CD4-positive, alpha-beta memory T cell (primary cell): ENCODE measurements at regions of chr17 and their contacts with region 1.

Region 1: GRCh38 chr17:51000835-51001638 is 119.6 kb downstream of the SPAG9 start:
- DNase-seq: peak in 4 of 5 donors; percentile 62 to 68 (median 66)
- H3K4me3 ChIP-seq: no peak overlapping the region
- H3K4me3 Mint-ChIP-seq: no peak overlapping the region
- H3K27ac ChIP-seq: no peak overlapping the region
- H3K27ac Mint-ChIP-seq: peak overlapping the region in 2 of 7 donors; percentile 2 to 23
- H3K4me1 ChIP-seq: no peaks in the 10 kb centered on the region
- H3K4me1 Mint-ChIP-seq: peaks cover 0 to 3% (median 1%) of the 10 kb centered on the region in 4 donors
- H3K27me3 ChIP-seq: no peaks in the 10 kb centered on the region
- H3K27me3 Mint-ChIP-seq: no peaks in the 10 kb centered on the region

Region 2: DNA sequence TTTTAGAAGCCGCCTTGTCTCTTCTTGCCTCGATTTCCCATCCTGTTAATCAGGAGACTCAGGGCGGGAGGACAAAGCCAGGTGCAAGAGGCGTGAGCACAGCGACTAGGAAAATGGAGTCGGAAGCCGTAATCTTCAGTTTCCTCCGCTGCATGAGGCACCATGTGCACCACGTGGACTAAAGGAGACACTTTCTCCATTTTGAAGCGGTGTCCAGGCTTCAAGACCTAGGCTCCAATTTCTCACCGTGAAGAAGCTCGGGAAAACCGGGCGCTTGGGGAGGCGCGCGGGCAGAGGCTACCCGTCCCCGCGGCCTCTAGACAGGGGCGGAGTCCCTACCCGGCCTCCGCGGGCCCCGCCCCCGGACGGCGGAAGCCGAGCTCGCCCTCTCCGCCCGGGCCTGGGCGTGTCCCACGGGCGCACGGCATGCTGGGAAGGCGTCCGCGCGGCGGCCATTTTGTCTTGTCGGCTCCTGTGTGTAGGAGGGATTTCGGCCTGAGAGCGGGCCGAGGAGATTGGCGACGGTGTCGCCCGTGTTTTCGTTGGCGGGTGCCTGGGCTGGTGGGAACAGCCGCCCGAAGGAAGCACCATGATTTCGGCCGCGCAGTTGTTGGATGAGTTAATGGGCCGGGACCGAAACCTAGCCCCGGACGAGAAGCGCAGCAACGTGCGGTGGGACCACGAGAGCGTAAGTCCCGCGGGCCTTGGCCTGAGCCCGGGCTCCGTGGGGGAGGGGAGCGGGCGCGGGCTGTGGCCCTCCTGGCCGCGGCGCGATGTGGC is 281.7 kb before region 1 on chr17 and contains the start of gene LUC7L3:
- CTCF ChIA-PET with region 1: no interaction called
- POLR2A ChIA-PET with region 1: no interaction called
- intact Hi-C with region 1: no loop called
- DNase-seq: peak; percentile 91 to 96 (median 93)
- H3K4me3 ChIP-seq: peak within 1 kb of the TSS; percentile 55 to 100
- H3K4me3 Mint-ChIP-seq: peak within 1 kb of the TSS; percentile 86 to 99 (median 98)
- H3K27ac ChIP-seq: peak within 1 kb of the TSS; percentile 97
- H3K27ac Mint-ChIP-seq: peak within 1 kb of the TSS; percentile 78 to 99 (median 99)
- H3K4me1 ChIP-seq: peaks cover 42% of the 10 kb centered on the region
- H3K4me1 Mint-ChIP-seq: peaks cover 17 to 44% (median 32%) of the 10 kb centered on the region in 4 donors
- H3K27me3 ChIP-seq: no peaks in the 10 kb centered on the region
- H3K27me3 Mint-ChIP-seq: no peaks in the 10 kb centered on the region
- total RNA-seq, gene LUC7L3: 254 to 291 TPM

Region 3: GRCh38 chr17:50749245-50749644 is 251.8 kb before region 1 on chr17:
- CTCF ChIA-PET with region 1: no interaction called
- POLR2A ChIA-PET with region 1: no interaction called
- intact Hi-C with region 1: no loop called
- DNase-seq: no peak
- H3K4me3 ChIP-seq: no peak overlapping the region
- H3K4me3 Mint-ChIP-seq: no peak overlapping the region
- H3K27ac ChIP-seq: no peak overlapping the region
- H3K27ac Mint-ChIP-seq: peak overlapping the region in 4 of 7 donors; percentile 9 to 53 (median 26)
- H3K4me1 ChIP-seq: no peaks in the 10 kb centered on the region
- H3K4me1 Mint-ChIP-seq: peaks cover 0 to 3% (median 0%) of the 10 kb centered on the region in 4 donors
- H3K27me3 ChIP-seq: no peaks in the 10 kb centered on the region
- H3K27me3 Mint-ChIP-seq: no peaks in the 10 kb centered on the region

Region 4: DNA sequence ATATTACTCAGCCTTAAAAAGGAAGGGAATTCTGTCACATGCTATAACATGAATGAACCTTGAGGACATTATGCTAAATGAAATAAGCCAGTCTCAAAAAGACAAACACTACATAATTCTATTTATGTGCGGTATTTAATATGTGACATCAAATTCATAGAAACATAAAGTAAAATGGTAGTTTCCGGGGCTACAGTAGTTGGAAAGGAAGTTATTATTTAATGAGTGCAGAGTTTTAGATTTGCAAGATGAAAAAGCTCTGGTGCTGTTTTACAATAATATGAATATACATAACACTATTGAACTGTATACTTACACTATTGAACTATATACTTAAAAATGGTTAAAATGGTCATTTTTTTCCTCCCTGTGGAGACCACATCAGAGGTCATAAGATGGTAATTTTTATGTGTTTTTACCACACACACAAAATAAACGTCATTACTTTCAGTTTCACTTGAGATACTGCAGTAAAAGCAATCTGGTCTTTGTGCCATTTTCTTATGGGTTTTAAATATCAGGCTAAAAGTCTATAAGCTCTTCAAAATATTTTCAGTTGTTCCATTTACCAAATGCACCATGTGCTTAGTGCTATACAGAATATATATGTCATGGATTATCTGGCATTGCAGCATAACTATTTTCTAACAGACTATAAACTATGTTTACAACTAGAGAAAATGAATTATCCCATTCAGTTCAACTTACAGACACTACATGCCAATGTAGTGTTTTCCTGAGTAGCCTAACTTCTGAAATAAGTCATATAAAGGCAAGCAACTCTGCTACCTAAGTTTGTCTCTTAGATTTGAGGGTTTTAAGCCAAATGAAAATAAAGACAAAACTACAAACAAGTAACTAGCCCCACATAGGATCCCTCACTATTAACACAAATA is 28.8 kb after region 1 on chr17:
- CTCF ChIA-PET with region 1: interaction called, 10 read pairs
- POLR2A ChIA-PET with region 1: no interaction called
- intact Hi-C with region 1: no loop called
- DNase-seq: peak in 4 of 5 donors; percentile 55 to 68 (median 61)
- H3K4me3 ChIP-seq: peak overlapping the region in 1 of 2 donors; percentile 22
- H3K4me3 Mint-ChIP-seq: peak overlapping the region; percentile 69 to 89 (median 82)
- H3K27ac ChIP-seq: peak overlapping the region; percentile 57
- H3K27ac Mint-ChIP-seq: peak overlapping the region; percentile 85 to 98 (median 97)
- H3K4me1 ChIP-seq: peaks cover 27% of the 10 kb centered on the region
- H3K4me1 Mint-ChIP-seq: peaks cover 15 to 32% (median 21%) of the 10 kb centered on the region in 4 donors
- H3K27me3 ChIP-seq: no peaks in the 10 kb centered on the region
- H3K27me3 Mint-ChIP-seq: no peaks in the 10 kb centered on the region

Region 5: DNA sequence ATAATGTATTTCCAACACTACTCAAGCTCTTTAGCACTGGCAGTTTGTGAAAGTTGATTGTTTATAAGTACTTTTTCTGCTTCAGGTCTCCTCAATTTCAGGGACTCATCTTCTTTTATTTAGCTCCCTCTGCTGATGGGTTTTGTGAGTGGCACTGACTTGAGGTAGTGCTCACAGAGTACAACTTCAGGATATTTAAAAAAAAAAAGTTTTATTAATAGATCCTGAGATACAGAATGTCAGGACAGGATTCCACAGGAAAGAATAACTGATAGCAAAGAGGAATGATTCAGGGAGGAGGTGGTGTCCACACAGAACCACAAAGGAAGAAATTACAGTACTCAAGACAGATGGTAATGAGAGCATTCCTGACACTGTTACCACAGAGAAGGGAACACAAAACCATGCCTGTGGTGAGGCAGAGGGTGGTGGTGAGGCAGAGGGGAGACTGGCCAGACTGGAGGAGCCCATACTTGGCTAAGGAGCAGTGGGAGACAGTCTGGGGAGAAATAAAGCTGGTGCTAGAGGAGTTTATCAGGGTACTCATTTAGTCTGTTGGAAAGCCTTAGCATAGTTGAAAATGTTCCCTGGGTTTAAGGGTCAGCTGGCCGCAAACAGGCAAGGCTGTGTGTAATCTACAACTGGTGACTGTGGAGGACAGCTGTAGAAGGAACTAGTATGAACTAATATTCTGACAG is 55.9 kb after region 1 on chr17:
- CTCF ChIA-PET with region 1: interaction called, 51 read pairs
- POLR2A ChIA-PET with region 1: no interaction called
- intact Hi-C with region 1: loop called (anchors 1 kb)
- DNase-seq: peak; percentile 31 to 49 (median 43)
- H3K4me3 ChIP-seq: no peak overlapping the region
- H3K4me3 Mint-ChIP-seq: no peak overlapping the region
- H3K27ac ChIP-seq: no peak overlapping the region
- H3K27ac Mint-ChIP-seq: peak overlapping the region in 1 of 7 donors; percentile 19
- H3K4me1 ChIP-seq: no peaks in the 10 kb centered on the region
- H3K4me1 Mint-ChIP-seq: peaks cover 6 to 22% (median 13%) of the 10 kb centered on the region in 4 donors
- H3K27me3 ChIP-seq: no peaks in the 10 kb centered on the region
- H3K27me3 Mint-ChIP-seq: no peaks in the 10 kb centered on the region

Region 6: DNA sequence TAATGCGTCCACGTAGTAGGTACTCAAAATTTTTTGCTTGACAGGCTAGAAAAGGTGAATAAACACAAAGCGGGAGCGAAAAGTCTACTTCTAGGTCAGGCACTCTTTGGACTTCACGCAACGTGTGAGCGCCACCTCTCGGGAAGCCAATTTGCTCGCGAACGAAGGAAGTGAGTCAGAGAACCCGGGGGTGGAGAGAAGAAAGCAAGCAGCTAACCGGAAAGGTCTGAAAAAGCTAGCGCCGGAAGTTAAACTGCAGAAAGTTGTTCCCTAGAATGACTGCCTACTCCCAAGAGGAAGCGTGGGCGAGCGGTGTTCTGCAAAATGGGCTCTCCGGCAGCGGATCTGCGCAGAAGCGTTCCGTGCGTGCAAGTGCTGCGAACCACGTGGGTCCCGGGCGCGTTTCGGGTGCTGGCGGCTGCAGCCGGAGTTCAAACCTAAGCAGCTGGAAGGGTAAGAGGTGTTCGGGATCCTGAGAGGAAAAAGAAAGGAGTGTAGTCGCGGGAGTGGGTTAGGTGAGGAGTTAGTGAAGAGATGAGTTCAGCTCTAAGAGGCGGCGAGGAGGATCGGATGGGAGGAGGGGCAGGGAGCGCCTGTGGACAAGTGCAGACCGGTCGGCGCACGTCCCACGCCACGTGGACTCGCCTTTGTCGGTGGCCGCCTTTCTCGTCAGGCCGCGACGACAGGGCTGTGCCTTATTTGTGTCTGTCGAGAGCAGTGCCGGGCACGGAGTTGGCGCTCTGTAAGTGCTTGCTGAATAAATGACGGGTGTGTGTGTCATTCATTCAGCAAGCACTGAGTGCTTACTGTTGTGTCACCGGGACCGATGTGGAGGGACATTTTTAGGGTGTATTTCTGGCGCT is 152.4 kb after region 1 on chr17 and contains the start of gene NME1:
- CTCF ChIA-PET with region 1: interaction called, 161 read pairs
- POLR2A ChIA-PET with region 1: interaction called, 46 read pairs
- intact Hi-C with region 1: loop called (anchors 1 kb)
- DNase-seq: peak; percentile 98 to 99 (median 98)
- H3K4me3 ChIP-seq: peak within 1 kb of the TSS; percentile 77 to 85
- H3K4me3 Mint-ChIP-seq: no peak within 1 kb of the TSS
- H3K27ac ChIP-seq: peak within 1 kb of the TSS; percentile 61
- H3K27ac Mint-ChIP-seq: no peak within 1 kb of the TSS
- H3K4me1 ChIP-seq: peaks cover 21% of the 10 kb centered on the region
- H3K4me1 Mint-ChIP-seq: peaks cover 0 to 7% (median 2%) of the 10 kb centered on the region in 4 donors
- H3K27me3 ChIP-seq: no peaks in the 10 kb centered on the region
- H3K27me3 Mint-ChIP-seq: peaks cover 0 to 1% of the 10 kb centered on the region in 2 donors
- total RNA-seq, gene NME1: 10.0 to 12.2 TPM

Region 7: GRCh38 chr17:51166197-51166986 is 165.4 kb after region 1 on chr17 and contains the start of gene NME2:
- CTCF ChIA-PET with region 1: interaction called, 4 read pairs
- POLR2A ChIA-PET with region 1: no interaction called
- intact Hi-C with region 1: loop called (anchors 5 kb)
- DNase-seq: peak; percentile 51 to 69 (median 59)
- H3K4me3 ChIP-seq: peak within 1 kb of the TSS; percentile 29 to 79
- H3K4me3 Mint-ChIP-seq: peak within 1 kb of the TSS; percentile 89 to 99 (median 97)
- H3K27ac ChIP-seq: peak within 1 kb of the TSS; percentile 61
- H3K27ac Mint-ChIP-seq: peak within 1 kb of the TSS; percentile 94 to 99 (median 98)
- H3K4me1 ChIP-seq: peaks cover 14% of the 10 kb centered on the region
- H3K4me1 Mint-ChIP-seq: peaks cover 15 to 34% (median 23%) of the 10 kb centered on the region in 4 donors
- H3K27me3 ChIP-seq: no peaks in the 10 kb centered on the region
- H3K27me3 Mint-ChIP-seq: no peaks in the 10 kb centered on the region
- total RNA-seq, gene NME2: 134 to 142 TPM

Region 8: GRCh38 chr17:51260125-51260880 is 259.3 kb after region 1 on chr17 and contains the start of gene UTP18:
- CTCF ChIA-PET with region 1: interaction called, 3 read pairs
- POLR2A ChIA-PET with region 1: no interaction called
- intact Hi-C with region 1: loop called (anchors 1 kb)
- DNase-seq: peak; percentile 96 to 98 (median 97)
- H3K4me3 ChIP-seq: peak within 1 kb of the TSS; percentile 74 to 85
- H3K4me3 Mint-ChIP-seq: peak within 1 kb of the TSS; percentile 91 to 98 (median 96)
- H3K27ac ChIP-seq: peak within 1 kb of the TSS; percentile 97
- H3K27ac Mint-ChIP-seq: peak within 1 kb of the TSS; percentile 96 to 99 (median 99)
- H3K4me1 ChIP-seq: peaks cover 72% of the 10 kb centered on the region
- H3K4me1 Mint-ChIP-seq: peaks cover 42 to 84% (median 58%) of the 10 kb centered on the region in 4 donors
- H3K27me3 ChIP-seq: no peaks in the 10 kb centered on the region
- H3K27me3 Mint-ChIP-seq: no peaks in the 10 kb centered on the region
- total RNA-seq, gene UTP18: 44.0 to 44.1 TPM